Lower leg skin (tissue), 4 donors: ENCODE measurements at regions of chr16 and their contacts with region 1.

Region 1: GRCh38 chr16:5006348-5007193 is 27.2 kb downstream of the NAGPA start:
- DNase-seq: no peak
- H3K4me3 ChIP-seq: no peak overlapping the region
- CTCF ChIP-seq: no peak
- POLR2A ChIP-seq: no peak

Region 2: GRCh38 chr16:3804426-3805016 is 1202.0 kb before region 1 on chr16:
- intact Hi-C with region 1: loop called (anchors 5 kb)
- DNase-seq: no peak
- H3K4me3 ChIP-seq: no peak overlapping the region
- CTCF ChIP-seq: no peak
- POLR2A ChIP-seq: no peak

Region 3: DNA sequence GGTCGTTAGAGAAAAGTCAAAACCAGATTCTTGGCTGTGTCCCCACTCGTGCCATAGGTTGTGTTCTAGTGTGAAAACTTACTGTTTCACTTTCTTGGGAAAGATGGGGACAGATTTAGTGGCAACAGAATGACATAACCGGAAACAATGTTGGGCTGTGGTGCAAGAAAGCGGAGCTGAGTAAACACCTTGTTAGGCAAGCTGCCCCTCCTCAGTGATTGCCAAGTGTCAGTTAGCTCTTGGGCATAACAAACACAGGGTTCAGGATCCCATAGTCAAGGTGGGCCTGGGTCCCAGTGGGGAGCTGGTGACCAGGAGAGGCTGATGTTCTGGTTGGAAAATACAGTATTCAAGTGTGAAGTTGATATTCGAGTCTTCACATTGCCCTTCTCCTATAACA is 143.9 kb before region 1 on chr16:
- intact Hi-C with region 1: no loop called
- DNase-seq: peak in 1 of 2 donors; percentile 63
- H3K4me3 ChIP-seq: no peak overlapping the region
- CTCF ChIP-seq: no peak
- POLR2A ChIP-seq: no peak

Region 4: GRCh38 chr16:5309946-5310611 is 303.5 kb after region 1 on chr16:
- intact Hi-C with region 1: no loop called
- DNase-seq: no peak
- H3K4me3 ChIP-seq: no peak overlapping the region
- CTCF ChIP-seq: no peak
- POLR2A ChIP-seq: no peak